Endothelial cell of umbilical vein (primary cell): ENCODE measurements at regions of chr7 and their contacts with region 1.

Region 1: GRCh38 chr7:44973610-44974401 is 5.0 kb downstream of the MYO1G start:
- DNase-seq: peak; percentile 39
- H3K4me3 ChIP-seq: no peak overlapping the region
- H3K27ac ChIP-seq: no peak overlapping the region
- H3K4me1 ChIP-seq: no peaks in the 10 kb centered on the region
- H3K27me3 ChIP-seq: no peaks in the 10 kb centered on the region
- CTCF ChIP-seq: peak; percentile 55 to 73
- POLR2A ChIP-seq: no peak

Region 2: GRCh38 chr7:44713680-44714335 is 260.0 kb before region 1 on chr7:
- CTCF ChIA-PET with region 1: no interaction called
- POLR2A ChIA-PET with region 1: no interaction called
- dilution Hi-C with region 1: no loop called
- intact Hi-C with region 1: no loop called
- DNase-seq: no peak
- H3K4me3 ChIP-seq: no peak overlapping the region
- H3K27ac ChIP-seq: no peak overlapping the region
- H3K4me1 ChIP-seq: no peaks in the 10 kb centered on the region
- H3K27me3 ChIP-seq: no peaks in the 10 kb centered on the region
- CTCF ChIP-seq: no peak
- POLR2A ChIP-seq: no peak

Region 3: DNA sequence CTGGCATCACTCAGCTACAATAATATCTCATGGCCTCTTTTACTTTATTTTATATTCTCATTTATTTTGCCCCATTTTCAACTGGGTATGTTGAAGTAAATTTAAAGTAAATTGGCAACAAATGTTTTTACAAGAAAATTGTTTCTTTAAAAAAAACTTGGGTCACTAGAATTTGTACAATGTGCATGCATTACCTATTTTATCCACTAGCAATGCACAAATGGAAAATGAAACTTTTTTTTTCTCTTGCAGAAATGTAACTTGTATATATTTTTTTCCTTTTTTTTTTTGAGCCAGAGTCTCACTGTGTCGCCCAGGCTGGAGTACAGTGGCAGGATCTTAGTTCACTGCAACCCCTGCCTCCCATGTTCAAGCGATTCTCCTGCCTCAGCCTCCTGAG is 115.6 kb before region 1 on chr7:
- CTCF ChIA-PET with region 1: interaction called, 13 read pairs
- POLR2A ChIA-PET with region 1: no interaction called
- dilution Hi-C with region 1: no loop called
- intact Hi-C with region 1: no loop called
- DNase-seq: no peak
- H3K4me3 ChIP-seq: no peak overlapping the region
- H3K27ac ChIP-seq: no peak overlapping the region
- H3K4me1 ChIP-seq: no peaks in the 10 kb centered on the region
- H3K27me3 ChIP-seq: no peaks in the 10 kb centered on the region
- CTCF ChIP-seq: no peak
- POLR2A ChIP-seq: no peak

Region 4: GRCh38 chr7:44986218-44987053 is 12.6 kb after region 1 on chr7:
- CTCF ChIA-PET with region 1: interaction called, 28 read pairs
- POLR2A ChIA-PET with region 1: interaction called, 7 read pairs
- dilution Hi-C with region 1: no loop called
- intact Hi-C with region 1: no loop called
- DNase-seq: peak; percentile 94
- H3K4me3 ChIP-seq: peak overlapping the region; percentile 42 to 81 (median 70)
- H3K27ac ChIP-seq: peak overlapping the region; percentile 88
- H3K4me1 ChIP-seq: peaks cover 29% of the 10 kb centered on the region
- H3K27me3 ChIP-seq: no peaks in the 10 kb centered on the region
- CTCF ChIP-seq: no peak
- POLR2A ChIP-seq: peak; percentile 98

Region 5: DNA sequence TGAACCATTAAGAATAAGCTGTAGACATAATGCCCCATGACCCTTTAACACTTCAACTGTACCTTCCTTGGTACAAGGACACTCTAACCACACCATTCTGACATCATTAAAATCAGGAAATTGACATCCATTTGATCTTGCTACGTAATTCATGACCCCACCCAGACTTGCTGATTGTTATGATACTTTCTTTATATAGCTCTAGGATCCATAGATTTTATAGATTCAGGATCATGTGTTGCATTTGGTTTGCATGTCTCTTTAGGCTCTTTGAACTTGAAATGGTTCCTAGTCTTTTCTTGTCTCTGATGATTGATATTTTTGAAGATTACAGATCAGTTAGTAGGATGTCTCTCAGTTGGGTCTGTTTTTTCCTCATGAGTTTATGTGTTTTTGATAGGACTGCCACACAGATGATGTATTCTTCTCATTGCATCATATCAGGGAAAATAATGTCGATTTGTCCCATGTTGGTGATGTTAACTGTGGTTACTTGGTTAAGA is 39.7 kb after region 1 on chr7:
- CTCF ChIA-PET with region 1: interaction called, 15 read pairs
- POLR2A ChIA-PET with region 1: no interaction called
- dilution Hi-C with region 1: no loop called
- intact Hi-C with region 1: no loop called
- DNase-seq: no peak
- H3K4me3 ChIP-seq: no peak overlapping the region
- H3K27ac ChIP-seq: no peak overlapping the region
- H3K4me1 ChIP-seq: peaks cover 5% of the 10 kb centered on the region
- H3K27me3 ChIP-seq: no peaks in the 10 kb centered on the region
- CTCF ChIP-seq: no peak
- POLR2A ChIP-seq: no peak

Region 6: GRCh38 chr7:45073031-45073785 is 99.4 kb after region 1 on chr7:
- CTCF ChIA-PET with region 1: interaction called, 11 read pairs
- POLR2A ChIA-PET with region 1: no interaction called
- dilution Hi-C with region 1: no loop called
- intact Hi-C with region 1: loop called (anchors 5 kb)
- DNase-seq: no peak
- H3K4me3 ChIP-seq: no peak overlapping the region
- H3K27ac ChIP-seq: no peak overlapping the region
- H3K4me1 ChIP-seq: no peaks in the 10 kb centered on the region
- H3K27me3 ChIP-seq: no peaks in the 10 kb centered on the region
- CTCF ChIP-seq: no peak
- POLR2A ChIP-seq: no peak

Region 7: DNA sequence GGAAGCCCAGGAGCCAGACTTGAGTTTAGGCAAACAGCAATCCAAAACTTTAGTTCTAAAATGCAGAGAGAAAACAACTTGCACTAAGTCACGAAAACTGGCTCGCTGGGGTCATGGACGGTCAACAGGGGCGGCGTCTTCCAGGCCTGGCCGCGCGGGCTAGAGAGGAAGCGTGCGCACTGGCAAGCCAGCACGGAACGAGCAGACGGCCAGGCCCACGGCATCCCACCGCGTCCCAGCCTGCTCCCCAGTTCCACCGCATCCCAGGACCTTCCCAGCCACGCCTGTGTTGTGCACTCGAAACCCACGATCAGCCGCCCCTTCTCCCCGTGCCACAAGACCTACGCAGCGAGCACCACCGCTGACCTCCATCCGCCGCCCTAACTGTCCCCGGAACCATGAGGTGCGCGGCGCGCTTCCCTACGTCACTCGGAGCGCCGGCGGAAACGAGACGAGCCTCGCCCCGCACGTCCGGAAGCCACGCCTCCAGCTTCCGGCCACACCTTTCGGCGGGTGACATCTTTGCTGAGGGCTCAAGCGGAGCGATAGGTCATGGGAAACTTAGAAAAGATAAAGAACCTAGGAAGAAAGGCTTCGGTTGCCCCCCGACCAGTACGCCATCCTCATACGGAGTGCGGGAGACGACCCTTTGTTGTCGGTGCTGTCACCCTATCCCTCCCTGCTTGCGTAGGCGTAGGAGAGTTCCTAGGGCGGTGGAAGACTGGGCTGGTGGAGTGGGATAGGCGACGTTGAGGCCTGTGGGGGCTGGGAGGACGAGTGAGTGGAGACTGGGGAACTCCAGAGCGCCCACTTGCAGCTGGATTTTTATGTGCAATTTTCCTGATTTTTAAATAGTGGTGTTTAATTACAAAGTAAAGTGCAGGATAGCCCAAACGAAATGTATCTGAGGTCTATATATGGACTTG is 137.8 kb after region 1 on chr7 and contains the start of gene TBRG4:
- CTCF ChIA-PET with region 1: interaction called, 23 read pairs
- POLR2A ChIA-PET with region 1: no interaction called
- dilution Hi-C with region 1: no loop called
- intact Hi-C with region 1: no loop called
- DNase-seq: peak; percentile 93
- H3K4me3 ChIP-seq: peak within 1 kb of the TSS; percentile 33 to 88 (median 64)
- H3K27ac ChIP-seq: peak within 1 kb of the TSS; percentile 57
- H3K4me1 ChIP-seq: peaks cover 8% of the 10 kb centered on the region
- H3K27me3 ChIP-seq: peaks cover 11 to 26% of the 10 kb centered on the region in 2 experiments
- CTCF ChIP-seq: peak in 1 of 2 donors; percentile 42
- POLR2A ChIP-seq: peak; percentile 82
- total RNA-seq, gene TBRG4: 56.7 and 63.4 TPM in 2 replicates

Region 8: GRCh38 chr7:45136106-45137060 is 162.6 kb after region 1 on chr7:
- CTCF ChIA-PET with region 1: interaction called, 585 read pairs
- POLR2A ChIA-PET with region 1: no interaction called
- dilution Hi-C with region 1: no loop called
- intact Hi-C with region 1: loop called (anchors 1 kb)
- DNase-seq: peak; percentile 73
- H3K4me3 ChIP-seq: no peak overlapping the region
- H3K27ac ChIP-seq: no peak overlapping the region
- H3K4me1 ChIP-seq: no peaks in the 10 kb centered on the region
- H3K27me3 ChIP-seq: peaks cover 4 to 5% of the 10 kb centered on the region in 2 experiments
- CTCF ChIP-seq: peak; percentile 79 to 83
- POLR2A ChIP-seq: no peak